ENCODE measurements at regions of chr22 and their contacts with region 1.

Region 1: DNA sequence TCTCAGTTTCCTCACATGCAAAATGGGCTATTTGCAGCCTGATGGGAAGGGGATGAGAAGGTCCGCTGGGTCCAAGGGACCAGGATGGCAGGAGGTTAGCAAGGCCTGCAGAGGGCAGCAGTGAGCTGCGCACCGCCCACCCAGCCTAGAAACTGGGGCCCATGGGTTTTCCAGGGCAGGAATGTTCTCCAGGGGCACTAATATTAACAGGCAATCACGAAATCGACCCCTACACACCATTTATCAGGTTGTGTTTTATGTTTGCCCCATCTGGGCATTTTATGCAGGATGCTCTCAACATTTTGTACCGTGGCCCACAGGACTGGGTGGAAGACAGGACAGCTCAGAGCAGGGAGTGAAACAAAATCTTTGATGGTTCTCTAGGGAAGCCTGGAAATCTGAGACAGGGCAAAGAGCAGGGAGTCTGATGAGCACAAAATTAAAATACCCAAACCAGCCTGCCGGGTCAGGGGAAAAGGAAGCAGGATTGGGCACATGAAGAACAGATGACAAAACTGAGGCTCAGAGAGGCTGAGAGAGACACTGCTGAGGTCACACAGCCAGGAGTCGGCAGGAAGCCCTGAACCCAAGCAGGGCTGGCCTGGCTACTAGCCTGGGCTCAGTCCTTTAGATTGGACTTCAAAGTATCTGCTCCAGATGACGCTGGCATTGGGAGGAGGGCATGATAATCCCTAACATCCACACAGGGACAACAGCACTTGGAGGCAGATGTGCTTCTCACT is 1.6 kb upstream of the BCR start:
- DNase-seq: peak; percentile 45 to 91 (median 78)

Region 2: GRCh38 chr22:23281406-23282088 is 102.9 kb after region 1 on chr22:
- intact Hi-C with region 1: loop called (anchors 2 kb)
- DNase-seq: peak; percentile 82 to 96 (median 90)

Region 3: DNA sequence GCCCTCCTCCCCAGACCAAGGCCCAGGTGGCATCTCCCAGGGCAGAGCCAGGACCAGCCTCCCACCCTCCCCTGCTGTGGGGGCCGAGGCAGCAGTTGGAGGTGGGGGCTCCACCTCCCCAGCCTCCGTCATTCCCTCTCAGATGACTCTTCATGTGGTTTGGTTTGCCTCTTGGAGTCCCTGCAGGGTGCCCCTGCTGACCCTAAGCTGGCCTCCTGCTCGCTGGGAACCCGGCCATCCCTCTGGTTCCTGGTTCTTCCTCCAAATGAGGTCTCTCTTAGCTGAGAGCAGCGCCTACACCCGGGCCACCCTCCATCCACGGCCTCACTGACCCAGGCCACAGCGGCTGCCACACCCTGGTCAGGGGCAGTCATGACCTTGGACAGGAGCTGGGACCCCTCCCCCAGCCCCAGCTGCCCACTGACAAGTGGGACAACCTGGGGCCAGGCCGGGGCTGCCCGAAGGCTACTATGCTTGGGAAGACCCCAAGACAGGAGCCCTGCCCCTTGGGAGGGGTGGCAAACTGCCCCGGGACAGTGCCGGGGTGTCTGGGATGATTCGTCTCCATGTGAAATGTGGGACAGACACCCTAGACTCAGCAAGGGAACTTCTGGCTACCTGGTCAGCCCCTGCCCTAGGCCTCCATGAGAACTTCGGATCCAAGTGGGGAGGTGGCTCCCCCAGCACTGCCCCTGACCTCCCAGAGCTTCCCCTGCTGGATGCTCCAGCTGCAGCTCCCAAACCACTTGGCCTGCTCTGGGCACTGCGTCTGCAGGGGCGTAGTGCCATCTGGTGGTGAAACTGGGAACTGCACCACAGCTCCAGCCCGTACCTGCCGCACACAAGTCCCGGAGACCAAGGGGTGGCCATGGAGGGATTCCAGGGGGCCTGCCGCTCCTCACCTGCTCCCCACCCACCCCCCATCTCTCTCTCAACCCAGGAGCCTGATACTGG is 206.9 kb after region 1 on chr22:
- intact Hi-C with region 1: loop called (anchors 10 kb)
- DNase-seq: peak; percentile 56 to 96 (median 89)

Region 4: GRCh38 chr22:23478201-23478600 is 299.5 kb after region 1 on chr22:
- intact Hi-C with region 1: no loop called
- DNase-seq: no peak